ENCODE measurements at regions of chr1 and their contacts with region 1.

Region 1: DNA sequence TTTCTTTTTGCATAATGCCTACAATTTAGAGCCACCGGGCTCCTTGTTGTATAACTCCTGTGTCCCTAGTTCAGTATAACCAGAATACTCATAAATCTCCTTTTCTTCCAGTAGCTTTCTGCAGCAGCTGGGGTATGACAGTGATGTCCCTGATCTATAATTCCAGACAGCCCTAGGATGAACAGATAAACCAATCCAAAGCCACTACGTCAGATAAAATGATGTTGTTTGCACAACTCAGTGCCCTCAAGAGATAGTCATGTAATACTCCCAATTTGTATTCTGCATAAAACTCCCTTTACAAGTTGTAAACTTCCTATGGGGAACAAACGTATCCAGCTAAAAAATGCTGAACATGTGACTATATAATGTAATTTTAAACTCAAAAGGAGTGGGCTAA is 44.7 kb downstream of the ZNF326 start:
- DNase-seq: no peak
- CTCF ChIP-seq: no peak

Region 2: DNA sequence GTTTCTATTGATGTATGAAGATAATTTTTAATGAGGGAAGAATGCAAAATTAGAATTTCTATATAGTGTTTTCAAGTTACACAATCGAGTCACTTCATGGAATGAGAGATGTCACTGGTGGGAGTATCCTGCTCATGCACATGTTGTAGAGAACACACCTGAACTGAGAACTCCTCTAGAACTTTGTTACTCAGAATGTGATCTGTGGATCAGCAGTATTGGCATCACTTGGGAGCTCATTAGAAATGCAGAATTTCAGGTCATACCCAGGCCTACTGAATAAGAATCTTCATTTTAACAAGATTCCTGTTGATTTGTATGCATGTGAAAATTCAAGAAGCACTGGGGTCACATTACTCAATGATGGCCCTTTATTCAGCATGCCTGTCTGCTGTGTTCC is 16.0 kb before region 1 on chr1:
- CTCF ChIA-PET with region 1: interaction called, 10 read pairs
- POLR2A ChIA-PET with region 1: no interaction called
- DNase-seq: no peak
- CTCF ChIP-seq: no peak